Activated CD8-positive, alpha-beta T cell treated with anti-CD3 and anti-CD28 coated beads for 36 hours (primary cell): ENCODE measurements at regions of chr19 and their contacts with region 1.

Region 1: DNA sequence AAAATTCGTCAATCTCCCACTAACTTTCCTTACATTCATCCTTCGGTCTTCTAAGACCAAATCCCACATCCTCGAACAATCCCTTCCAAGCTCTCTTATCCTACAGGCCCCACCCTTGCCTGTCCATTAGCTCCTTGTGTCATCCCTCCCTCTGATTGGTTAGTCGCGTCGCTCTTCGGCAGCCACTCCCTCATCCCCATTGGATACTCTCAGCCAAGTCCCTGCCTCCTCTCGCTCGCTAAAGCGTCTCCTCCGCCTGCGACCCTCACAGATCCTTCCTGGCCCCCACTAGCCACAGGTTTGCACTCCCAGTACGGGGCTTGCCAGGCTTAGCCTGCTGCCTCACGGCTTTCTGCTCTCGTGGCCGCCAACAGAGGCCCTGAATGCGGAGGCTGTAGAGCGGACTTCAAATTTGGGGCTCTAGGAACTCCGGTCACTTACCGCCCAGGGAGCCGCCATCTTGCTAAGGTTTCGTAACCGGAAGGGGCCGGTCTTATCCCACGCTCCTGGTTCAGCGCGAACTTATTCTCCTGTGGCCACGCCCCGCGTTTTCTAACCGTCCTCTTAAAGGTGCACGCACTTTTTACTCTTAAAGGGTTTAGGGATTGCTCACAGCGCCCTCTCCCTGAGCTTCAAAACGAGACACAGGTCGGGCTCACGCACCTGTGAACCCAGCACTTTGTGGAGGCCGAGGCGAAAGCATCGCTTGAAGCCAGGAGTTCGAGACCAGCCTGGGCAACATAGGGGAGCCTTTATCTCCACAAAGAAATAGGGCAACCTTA is at the start of gene DMAC2:
- DNase-seq: peak; percentile 100
- ATAC-seq: peak; percentile 96
- H3K4me3 Mint-ChIP-seq: no peak within 1 kb of the TSS
- H3K27ac Mint-ChIP-seq: no peak within 1 kb of the TSS
- H3K4me1 Mint-ChIP-seq: peaks cover 17% of the 10 kb centered on the region
- H3K27me3 Mint-ChIP-seq: peaks cover 2% of the 10 kb centered on the region
- CTCF ChIP-seq: peak; percentile 48
- total RNA-seq, gene DMAC2: 47.6 to 51.5 TPM

Region 2: GRCh38 chr19:41426952-41427646 is 12.5 kb before region 1 on chr19 and contains the start of gene B3GNT8:
- CTCF ChIA-PET with region 1: interaction called, 15 read pairs
- POLR2A ChIA-PET with region 1: interaction called, 13 read pairs
- intact Hi-C with region 1: no loop called
- DNase-seq: peak; percentile 73
- ATAC-seq: peak; percentile 83
- H3K4me3 Mint-ChIP-seq: peak within 1 kb of the TSS; percentile 71
- H3K27ac Mint-ChIP-seq: peak within 1 kb of the TSS; percentile 86
- H3K4me1 Mint-ChIP-seq: peaks cover 24% of the 10 kb centered on the region
- H3K27me3 Mint-ChIP-seq: no peaks in the 10 kb centered on the region
- CTCF ChIP-seq: no peak
- total RNA-seq, gene B3GNT8: 0.59 to 1.1 TPM

Region 3: DNA sequence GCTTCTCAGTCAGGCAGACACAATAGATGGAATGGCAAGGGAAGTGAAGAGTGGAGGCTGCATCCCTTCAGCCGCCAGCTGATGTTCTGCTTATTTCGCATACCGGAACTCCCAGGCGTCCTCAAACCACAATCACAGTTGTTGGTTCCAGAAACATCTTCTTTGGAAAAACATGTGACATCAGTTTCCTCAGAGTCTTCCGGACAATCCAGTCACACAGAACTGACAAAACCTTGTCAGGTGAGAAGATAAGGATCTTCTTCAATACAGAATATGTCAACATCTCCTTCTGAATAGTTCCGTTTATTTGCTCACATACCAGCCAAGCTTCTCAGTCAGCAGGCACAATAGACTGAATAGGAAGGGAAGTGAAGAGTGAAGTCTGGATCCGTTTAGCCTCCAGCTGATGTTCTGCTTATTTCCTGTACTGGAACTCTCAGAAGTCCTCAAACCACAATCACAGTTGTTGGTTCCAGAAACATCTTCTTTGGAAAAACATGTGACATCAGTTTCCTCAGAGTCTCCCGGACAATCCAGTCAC is 91.2 kb after region 1 on chr19:
- CTCF ChIA-PET with region 1: no interaction called
- POLR2A ChIA-PET with region 1: no interaction called
- intact Hi-C with region 1: no loop called
- DNase-seq: no peak
- ATAC-seq: no peak
- H3K4me3 Mint-ChIP-seq: peak overlapping the region; percentile 15
- H3K27ac Mint-ChIP-seq: peak overlapping the region; percentile 6
- H3K4me1 Mint-ChIP-seq: peaks cover 65% of the 10 kb centered on the region
- H3K27me3 Mint-ChIP-seq: peaks cover 29% of the 10 kb centered on the region
- CTCF ChIP-seq: no peak